Activated CD4-positive, alpha-beta T cell treated with anti-CD3 and anti-CD28 coated beads, Interleukin-2, amount 10 ng/mL, durations not matched to agents 24 days and 14 days (primary cell): ENCODE measurements at regions of chr3 and their contacts with region 1.

Region 1: DNA sequence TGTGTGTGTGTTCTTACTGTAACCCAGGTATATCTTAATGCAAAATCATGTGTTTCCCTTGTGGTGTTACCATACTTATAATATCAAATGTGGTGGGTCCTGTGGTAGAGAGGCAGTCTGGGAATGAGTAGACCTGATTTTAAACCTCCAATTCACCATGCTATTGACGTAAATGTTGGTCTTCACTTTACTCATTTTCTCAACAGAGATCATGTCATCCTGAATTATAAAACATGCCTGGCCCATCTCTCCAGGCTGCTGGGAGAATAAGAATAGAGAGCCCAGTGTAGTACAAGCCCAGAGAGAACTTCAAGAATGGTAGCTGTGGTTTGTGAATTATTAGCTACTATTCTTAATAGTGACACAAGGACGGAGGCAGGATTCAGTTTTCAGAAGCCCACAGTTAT is 88.1 kb downstream of the MBNL1 start:
- DNase-seq: no peak
- H3K4me3 Mint-ChIP-seq: no peak overlapping the region
- H3K27ac Mint-ChIP-seq: peak overlapping the region; percentile 51
- H3K4me1 Mint-ChIP-seq: peaks cover 49% of the 10 kb centered on the region
- H3K27me3 Mint-ChIP-seq: no peaks in the 10 kb centered on the region

Region 2: DNA sequence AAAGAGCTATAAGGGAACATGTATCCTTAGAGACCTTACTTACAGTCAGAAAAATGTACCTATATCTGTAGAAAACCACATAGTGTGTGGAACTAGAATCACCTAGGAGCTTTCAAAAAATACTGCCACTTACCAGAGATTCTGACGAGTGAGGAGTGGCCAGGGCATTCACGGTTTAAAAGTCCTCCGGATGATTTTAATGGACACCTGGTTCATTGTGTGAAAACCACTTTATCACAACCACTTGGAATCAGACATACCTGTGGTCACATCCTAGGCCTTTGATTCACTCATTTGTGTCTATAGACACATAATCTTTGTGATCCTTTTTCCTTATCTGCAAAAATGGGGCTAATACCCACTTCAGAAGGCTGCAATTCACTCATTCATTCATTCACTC is 71.7 kb after region 1 on chr3:
- intact Hi-C with region 1: loop called (anchors 5 kb)
- DNase-seq: no peak
- H3K4me3 Mint-ChIP-seq: no peak overlapping the region
- H3K27ac Mint-ChIP-seq: peak overlapping the region; percentile 15
- H3K4me1 Mint-ChIP-seq: peaks cover 43% of the 10 kb centered on the region
- H3K27me3 Mint-ChIP-seq: no peaks in the 10 kb centered on the region